Calu3 (cell line): ENCODE measurements at regions of chr12 and their contacts with region 1.

Region 1: GRCh38 chr12:62793256-62794217 is 141.4 kb downstream of the PPM1H start:
- DNase-seq: peak; percentile 88
- H3K4me3 Mint-ChIP-seq: no peak overlapping the region
- H3K27ac Mint-ChIP-seq: peak overlapping the region; percentile 82
- H3K4me1 Mint-ChIP-seq: peaks cover 35% of the 10 kb centered on the region
- H3K27me3 Mint-ChIP-seq: no peaks in the 10 kb centered on the region
- CTCF ChIP-seq: peak; percentile 90

Region 2: DNA sequence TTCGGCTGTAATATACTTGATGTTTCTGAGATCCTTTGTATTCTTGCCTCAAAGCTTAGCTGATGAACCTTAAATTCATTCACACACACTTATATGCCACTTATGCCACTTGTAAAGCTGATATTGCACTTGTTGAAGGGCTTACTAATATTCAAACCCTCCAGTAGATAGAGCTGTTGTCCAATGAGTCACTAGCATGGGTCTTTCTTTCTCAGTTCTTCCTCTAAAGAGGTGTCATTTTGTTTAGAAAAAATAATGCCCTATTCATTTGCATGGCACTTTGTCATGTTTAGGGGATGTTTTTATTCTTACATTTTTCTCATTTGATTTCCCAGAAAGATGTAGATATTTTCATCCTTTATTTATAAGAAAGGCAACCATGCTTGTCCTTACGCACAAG is 270.6 kb before region 1 on chr12:
- CTCF ChIA-PET with region 1: interaction called, 8 read pairs
- intact Hi-C with region 1: loop called (anchors 1 kb)
- DNase-seq: no peak
- H3K4me3 Mint-ChIP-seq: no peak overlapping the region
- H3K27ac Mint-ChIP-seq: no peak overlapping the region
- H3K4me1 Mint-ChIP-seq: peaks cover 17% of the 10 kb centered on the region
- H3K27me3 Mint-ChIP-seq: no peaks in the 10 kb centered on the region
- CTCF ChIP-seq: no peak

Region 3: GRCh38 chr12:62603061-62603810 is 190.3 kb before region 1 on chr12:
- CTCF ChIA-PET with region 1: interaction called, 10 read pairs
- intact Hi-C with region 1: loop called (anchors 1 kb)
- DNase-seq: peak; percentile 92
- H3K4me3 Mint-ChIP-seq: peak overlapping the region; percentile 88
- H3K27ac Mint-ChIP-seq: peak overlapping the region; percentile 99
- H3K4me1 Mint-ChIP-seq: peaks cover 18% of the 10 kb centered on the region
- H3K27me3 Mint-ChIP-seq: no peaks in the 10 kb centered on the region
- CTCF ChIP-seq: peak; percentile 47

Region 4: DNA sequence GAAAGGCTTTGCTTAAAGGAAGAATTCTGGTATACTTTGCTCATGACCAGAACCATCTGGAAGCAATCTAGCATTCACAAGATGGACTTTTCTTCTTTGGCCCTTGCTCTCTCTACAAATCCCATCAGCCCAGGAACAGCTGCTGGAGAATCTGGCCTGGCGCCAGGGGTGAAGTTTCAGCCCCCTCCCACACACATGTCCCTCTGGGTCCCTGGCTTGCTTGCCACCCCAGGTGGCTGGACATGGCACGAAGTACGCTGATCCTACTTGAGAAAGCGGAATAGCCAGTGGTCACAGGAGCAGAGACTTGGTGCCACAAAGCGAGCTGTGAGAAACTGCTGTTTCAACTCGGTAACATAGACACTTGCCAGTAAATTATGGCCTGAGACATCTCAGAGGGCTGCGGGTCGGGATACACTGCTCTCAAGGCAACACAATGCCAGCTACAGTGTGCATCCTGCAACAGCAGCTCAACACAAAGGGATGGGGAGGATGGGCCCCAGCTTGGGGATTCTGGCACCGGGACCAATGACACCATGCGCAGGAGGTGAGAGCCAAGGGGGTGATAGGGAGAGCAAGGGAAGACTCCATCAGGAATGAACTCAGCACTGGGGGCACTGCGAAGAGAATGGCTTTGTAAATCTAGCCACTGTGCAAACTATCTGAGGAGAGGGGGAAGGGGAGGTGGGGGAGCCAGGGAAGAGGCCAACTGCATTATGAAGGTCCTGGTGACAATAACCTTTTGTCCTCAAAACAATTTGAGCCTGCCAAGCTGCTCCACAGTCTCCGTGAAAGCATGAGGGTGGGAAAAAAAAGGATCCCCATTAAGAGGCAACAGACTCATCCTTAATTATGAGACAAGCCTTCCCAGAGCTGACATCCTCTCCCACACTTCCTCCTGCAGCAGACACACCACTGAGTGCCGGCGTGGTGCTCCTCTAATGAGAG is 78.5 kb before region 1 on chr12:
- CTCF ChIA-PET with region 1: no interaction called
- intact Hi-C with region 1: loop called (anchors 5 kb)
- DNase-seq: no peak
- H3K4me3 Mint-ChIP-seq: no peak overlapping the region
- H3K27ac Mint-ChIP-seq: no peak overlapping the region
- H3K4me1 Mint-ChIP-seq: peaks cover 35% of the 10 kb centered on the region
- H3K27me3 Mint-ChIP-seq: no peaks in the 10 kb centered on the region
- CTCF ChIP-seq: no peak

Region 5: DNA sequence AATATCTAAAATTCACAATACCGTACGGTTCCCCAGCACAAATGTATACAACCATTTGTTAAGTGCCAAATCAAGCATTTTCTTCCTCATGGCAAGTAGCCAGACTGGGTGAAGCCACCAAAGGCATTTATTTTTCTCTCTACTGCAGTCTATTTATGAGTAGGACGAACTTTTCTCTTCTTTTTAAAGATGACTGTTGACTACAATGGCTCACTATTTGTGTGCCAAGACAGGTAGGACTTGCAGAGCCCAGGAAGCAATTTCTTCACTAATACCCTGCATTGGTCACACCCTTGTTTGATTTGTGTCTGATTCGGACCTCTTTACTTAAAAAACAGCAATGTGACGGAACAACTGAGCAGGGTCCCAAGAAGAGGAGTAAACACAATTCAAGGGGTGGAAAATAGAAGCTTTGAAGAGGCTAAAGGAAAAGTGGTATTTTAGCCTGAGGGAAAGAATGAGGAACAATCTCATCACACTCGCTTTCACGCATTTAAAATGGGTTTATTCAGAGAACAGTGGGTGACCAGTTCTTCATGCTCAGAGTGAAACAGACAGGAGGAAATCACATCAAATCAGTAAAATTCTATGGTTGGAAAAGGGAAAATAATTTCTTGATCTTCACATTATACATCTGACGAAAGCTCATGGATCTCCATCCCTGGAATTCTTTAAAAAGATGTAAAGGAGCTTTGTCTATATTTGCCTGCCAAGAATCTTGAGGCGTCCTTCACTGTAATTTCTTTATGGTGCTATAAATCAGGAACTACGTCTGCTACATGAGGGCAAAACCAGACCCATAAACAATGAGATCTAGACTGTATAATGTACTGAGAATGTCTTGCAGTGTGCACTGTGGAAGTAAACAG is 42.4 kb before region 1 on chr12:
- CTCF ChIA-PET with region 1: no interaction called
- intact Hi-C with region 1: loop called (anchors 5 kb)
- DNase-seq: peak; percentile 67
- H3K4me3 Mint-ChIP-seq: peak overlapping the region; percentile 23
- H3K27ac Mint-ChIP-seq: peak overlapping the region; percentile 90
- H3K4me1 Mint-ChIP-seq: peaks cover 31% of the 10 kb centered on the region
- H3K27me3 Mint-ChIP-seq: no peaks in the 10 kb centered on the region
- CTCF ChIP-seq: no peak

Region 6: GRCh38 chr12:63025116-63025515 is 231.6 kb after region 1 on chr12:
- CTCF ChIA-PET with region 1: no interaction called
- intact Hi-C with region 1: no loop called
- DNase-seq: no peak
- H3K4me3 Mint-ChIP-seq: no peak overlapping the region
- H3K27ac Mint-ChIP-seq: no peak overlapping the region
- H3K4me1 Mint-ChIP-seq: no peaks in the 10 kb centered on the region
- H3K27me3 Mint-ChIP-seq: no peaks in the 10 kb centered on the region
- CTCF ChIP-seq: no peak